ENCODE measurements at regions of chrX and their contacts with region 1.

Region 1: GRCh38 chrX:120603707-120604360 is at the start of gene MCTS1:
- DNase-seq: peak; percentile 88
- ATAC-seq: peak; percentile 98
- H3K4me3 Mint-ChIP-seq: peak within 1 kb of the TSS; percentile 95
- H3K27ac Mint-ChIP-seq: peak within 1 kb of the TSS; percentile 96
- H3K4me1 Mint-ChIP-seq: no peaks in the 10 kb centered on the region
- H3K27me3 Mint-ChIP-seq: no peaks in the 10 kb centered on the region
- CTCF ChIP-seq: no peak
- total RNA-seq, gene MCTS1: 66.3 to 71.0 TPM

Region 2: DNA sequence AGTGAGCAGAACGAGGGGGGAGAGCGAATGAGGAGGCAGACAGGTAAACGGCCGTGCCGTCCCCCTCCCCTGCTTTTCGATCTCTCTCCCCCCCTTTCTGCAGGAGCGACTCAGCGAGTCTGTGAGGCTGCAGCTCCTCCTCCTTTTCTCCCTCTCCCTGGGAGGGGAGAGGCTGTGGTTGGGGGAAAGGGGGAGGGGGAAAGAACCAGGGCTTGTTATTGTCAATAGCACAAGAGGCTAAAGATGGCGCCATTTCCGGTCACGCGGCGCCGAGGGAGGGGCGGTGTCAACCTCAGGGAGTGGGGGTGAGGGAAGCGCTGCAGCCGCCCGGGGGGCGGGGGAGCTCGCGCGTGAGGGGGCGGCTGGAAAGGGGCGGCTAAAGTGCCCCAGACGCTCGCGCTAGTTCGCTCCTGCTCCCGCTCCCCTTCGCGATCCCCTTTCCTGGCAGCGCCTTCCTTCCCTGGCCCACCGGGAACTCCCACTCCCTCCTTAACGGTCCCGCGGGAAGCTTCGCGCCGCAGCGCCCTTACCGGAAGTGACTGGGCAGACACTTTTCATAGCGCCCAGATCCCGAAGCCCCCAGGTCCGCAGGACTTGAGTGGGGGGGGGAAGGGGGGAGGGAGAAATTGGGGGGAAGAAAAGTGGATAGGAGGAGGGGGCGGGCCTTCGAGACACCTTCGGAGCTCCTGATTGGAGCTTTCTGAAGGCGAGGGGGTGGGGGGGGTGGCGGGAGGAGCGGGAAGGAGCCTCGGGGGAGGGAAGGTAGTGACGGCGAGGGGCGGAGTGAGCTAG is 42.8 kb before region 1 on chrX and contains the start of gene CUL4B:
- CTCF ChIA-PET with region 1: no interaction called
- POLR2A ChIA-PET with region 1: interaction called, 9 read pairs
- intact Hi-C with region 1: loop called (anchors 2 kb)
- DNase-seq: peak; percentile 95
- ATAC-seq: peak; percentile 90
- H3K4me3 Mint-ChIP-seq: peak within 1 kb of the TSS; percentile 98
- H3K27ac Mint-ChIP-seq: peak within 1 kb of the TSS; percentile 98
- H3K4me1 Mint-ChIP-seq: peaks cover 21% of the 10 kb centered on the region
- H3K27me3 Mint-ChIP-seq: no peaks in the 10 kb centered on the region
- CTCF ChIP-seq: no peak
- total RNA-seq, gene CUL4B: 39.1 to 39.8 TPM

Region 3: GRCh38 chrX:120585702-120586101 is 18.1 kb before region 1 on chrX:
- CTCF ChIA-PET with region 1: no interaction called
- POLR2A ChIA-PET with region 1: no interaction called
- intact Hi-C with region 1: no loop called
- DNase-seq: no peak
- ATAC-seq: no peak
- H3K4me3 Mint-ChIP-seq: no peak overlapping the region
- H3K27ac Mint-ChIP-seq: no peak overlapping the region
- H3K4me1 Mint-ChIP-seq: peaks cover 3% of the 10 kb centered on the region
- H3K27me3 Mint-ChIP-seq: no peaks in the 10 kb centered on the region
- CTCF ChIP-seq: no peak